Activated T-helper 1 cell treated with anti-CD3 and anti-CD28 coated beads, Interleukin-12 subunit alpha, Interleukin-12 subunit beta, Interleukin-2, Interleukin-4 antibody, amounts not matched to agents 30 ng/mL and 10 ng/mL and 1 ng/mL, durations not matched to agents 14 hours and 24 hours and 36 hours (primary cell): ENCODE measurements at regions of chr21 and their contacts with region 1.

Region 1: DNA sequence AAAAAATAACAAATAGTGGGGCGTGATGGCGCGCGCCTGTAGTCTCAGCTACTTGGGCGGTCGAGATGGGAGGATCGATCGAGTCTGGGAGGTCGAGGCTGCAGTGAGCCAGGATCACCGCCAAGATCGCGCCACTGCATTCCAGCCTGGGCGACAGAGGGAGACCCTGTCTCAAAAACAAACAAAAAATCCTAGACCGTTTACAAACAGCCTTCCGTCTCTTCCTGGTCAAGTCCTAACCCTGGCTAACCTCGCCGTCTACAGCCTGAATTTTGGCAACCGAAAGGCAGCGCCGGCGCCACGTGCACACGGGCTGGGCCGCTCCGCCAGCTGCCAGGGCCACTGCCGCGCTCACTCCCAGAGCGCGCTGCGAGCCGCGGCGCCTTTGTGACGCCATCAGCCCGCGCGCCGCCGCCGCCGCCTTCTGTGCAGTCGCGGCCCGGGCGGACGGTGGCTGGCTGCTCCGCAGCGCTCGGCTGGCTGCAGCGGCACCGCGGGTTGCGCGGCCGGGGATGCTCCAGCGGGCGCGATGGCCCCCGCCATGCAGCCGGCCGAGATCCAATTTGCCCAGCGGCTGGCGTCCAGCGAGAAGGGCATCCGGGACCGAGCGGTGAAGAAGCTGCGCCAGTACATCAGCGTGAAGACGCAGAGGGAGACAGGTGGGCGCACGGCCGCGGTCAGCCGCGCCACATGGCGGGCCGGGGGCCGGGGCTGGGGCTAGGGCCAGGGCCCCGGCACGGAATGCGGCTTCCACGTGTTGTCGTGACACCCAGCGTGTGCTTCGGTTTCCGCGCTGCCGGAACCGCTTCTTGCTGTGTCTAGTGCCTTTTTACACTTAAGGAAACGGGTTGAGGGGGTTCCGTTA is at the starts of genes HSF2BP and RRP1B:
- DNase-seq: peak; percentile 79
- H3K4me3 Mint-ChIP-seq: peak within 1 kb of the TSS; percentile 95
- H3K27ac Mint-ChIP-seq: peak within 1 kb of the TSS; percentile 92
- H3K4me1 Mint-ChIP-seq: peaks cover 28% of the 10 kb centered on the region
- H3K27me3 Mint-ChIP-seq: peaks cover 2% of the 10 kb centered on the region
- total RNA-seq, gene HSF2BP: 1.2 TPM in 2 replicates
- total RNA-seq, gene RRP1B: 76.8 and 77.8 TPM in 2 replicates

Region 2: GRCh38 chr21:42973991-42974831 is 685.2 kb before region 1 on chr21 and contains the start of gene PKNOX1:
- intact Hi-C with region 1: loop called (anchors 5 kb)
- DNase-seq: peak; percentile 99
- H3K4me3 Mint-ChIP-seq: peak within 1 kb of the TSS; percentile 87
- H3K27ac Mint-ChIP-seq: peak within 1 kb of the TSS; percentile 87
- H3K4me1 Mint-ChIP-seq: peaks cover 25% of the 10 kb centered on the region
- H3K27me3 Mint-ChIP-seq: no peaks in the 10 kb centered on the region
- total RNA-seq, gene PKNOX1: 25.1 and 28.8 TPM in 2 replicates

Region 3: DNA sequence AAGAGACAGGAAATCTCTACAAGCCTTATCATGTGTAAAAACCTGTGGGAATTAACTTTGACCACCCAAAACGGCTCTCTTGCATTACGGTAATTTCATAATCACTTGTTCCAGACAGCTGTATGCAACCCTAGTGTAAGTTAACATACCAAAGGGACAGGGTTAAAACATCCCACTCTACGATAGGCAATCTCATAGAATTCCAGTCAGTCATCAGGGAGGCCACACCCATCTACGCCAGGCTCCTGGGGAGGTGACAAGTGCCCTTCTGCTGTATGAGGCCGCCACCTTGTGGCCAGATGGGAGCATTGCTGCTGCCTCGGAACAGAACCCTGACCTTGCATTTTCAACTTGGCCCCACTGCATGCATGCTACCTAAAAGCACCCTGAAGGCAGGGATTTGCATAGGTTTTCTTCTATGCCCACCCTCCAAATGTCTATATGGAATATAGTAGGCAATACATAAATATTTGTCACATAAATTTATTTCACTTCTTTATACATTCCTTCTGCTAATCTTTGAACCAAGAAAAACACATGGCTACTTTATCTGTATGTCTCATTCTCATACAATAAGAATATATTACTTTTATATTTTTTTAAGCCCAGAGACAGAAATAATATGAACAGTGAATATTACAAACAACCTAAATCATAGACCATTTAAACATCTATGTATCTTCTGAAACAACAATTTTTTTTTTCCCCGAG is 12.7 kb before region 1 on chr21:
- intact Hi-C with region 1: loop called (anchors 1 kb)
- DNase-seq: peak; percentile 77
- H3K4me3 Mint-ChIP-seq: peak overlapping the region; percentile 39
- H3K27ac Mint-ChIP-seq: peak overlapping the region; percentile 40
- H3K4me1 Mint-ChIP-seq: peaks cover 19% of the 10 kb centered on the region
- H3K27me3 Mint-ChIP-seq: peaks cover 13% of the 10 kb centered on the region

Region 4: GRCh38 chr21:43718872-43719747 is 59.7 kb after region 1 on chr21 and contains the start of gene PDXK:
- intact Hi-C with region 1: loop called (anchors 1 kb)
- DNase-seq: peak; percentile 82
- H3K4me3 Mint-ChIP-seq: peak within 1 kb of the TSS; percentile 86
- H3K27ac Mint-ChIP-seq: peak within 1 kb of the TSS; percentile 79
- H3K4me1 Mint-ChIP-seq: peaks cover 17% of the 10 kb centered on the region
- H3K27me3 Mint-ChIP-seq: peaks cover 25% of the 10 kb centered on the region
- total RNA-seq, gene PDXK: 123 and 135 TPM in 2 replicates

Region 5: DNA sequence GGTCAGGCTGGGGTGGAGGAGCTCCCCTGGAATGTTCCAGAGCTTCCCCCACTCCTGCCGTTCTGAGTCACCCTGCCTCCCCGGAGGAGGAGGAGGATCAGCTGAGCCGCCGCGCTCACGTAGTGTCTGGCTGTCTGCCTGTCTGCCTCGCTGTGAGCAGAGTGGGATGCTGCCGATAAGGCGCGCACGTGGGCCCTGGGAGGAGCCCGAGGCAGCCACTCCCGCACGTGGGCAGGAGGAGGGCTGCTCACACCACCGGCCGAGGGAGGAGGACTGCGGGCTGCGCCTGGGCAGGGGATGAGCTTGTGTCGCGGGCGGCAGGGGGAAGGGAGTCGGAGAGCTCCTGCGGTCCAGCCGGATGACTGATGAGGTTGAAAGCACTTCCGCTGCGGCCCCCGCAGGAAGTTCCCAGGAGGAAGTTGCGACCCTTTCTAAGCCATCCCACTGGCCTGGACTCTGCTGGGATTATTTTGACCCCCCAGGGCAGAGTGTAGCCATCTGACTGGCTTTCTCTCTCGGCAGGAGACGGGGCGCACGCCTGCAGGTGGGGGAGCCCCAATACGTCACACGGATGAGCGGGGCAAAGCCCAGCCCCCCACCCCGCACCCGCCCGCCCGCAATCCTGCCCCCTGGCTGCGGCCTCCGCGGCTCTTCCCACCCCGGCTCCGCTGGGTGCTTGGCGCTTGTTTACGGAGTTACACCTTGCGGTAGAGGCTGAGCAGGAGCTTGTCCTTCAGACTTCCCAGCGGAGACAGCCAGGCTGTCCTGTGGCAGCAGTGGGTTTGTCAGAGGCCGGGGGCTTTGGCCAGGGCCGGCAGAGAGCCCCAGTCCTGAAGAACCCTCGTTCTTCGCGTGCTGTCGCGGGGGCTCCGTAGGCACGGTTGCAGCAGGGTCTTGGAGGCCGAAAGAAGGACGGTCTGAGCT is 69.4 kb after region 1 on chr21:
- intact Hi-C with region 1: loop called (anchors 2 kb)
- DNase-seq: peak; percentile 72
- H3K4me3 Mint-ChIP-seq: peak overlapping the region; percentile 80
- H3K27ac Mint-ChIP-seq: peak overlapping the region; percentile 87
- H3K4me1 Mint-ChIP-seq: peaks cover 50% of the 10 kb centered on the region
- H3K27me3 Mint-ChIP-seq: no peaks in the 10 kb centered on the region

Region 6: GRCh38 chr21:43775795-43776430 is 116.5 kb after region 1 on chr21 and contains the start of gene CSTB:
- intact Hi-C with region 1: loop called (anchors 5 kb)
- DNase-seq: peak; percentile 83
- H3K4me3 Mint-ChIP-seq: peak within 1 kb of the TSS; percentile 96
- H3K27ac Mint-ChIP-seq: peak within 1 kb of the TSS; percentile 80
- H3K4me1 Mint-ChIP-seq: peaks cover 43% of the 10 kb centered on the region
- H3K27me3 Mint-ChIP-seq: no peaks in the 10 kb centered on the region
- total RNA-seq, gene CSTB: 51.9 and 52.4 TPM in 2 replicates